ENCODE measurements at regions of chr17 and their contacts with region 1.

Region 1: GRCh38 chr17:82170412-82170961 is 42.2 kb downstream of the CCDC57 start:
- DNase-seq: no peak
- H3K4me3 ChIP-seq: no peak overlapping the region
- H3K27ac ChIP-seq: no peak overlapping the region
- H3K4me1 ChIP-seq: no peaks in the 10 kb centered on the region
- H3K27me3 ChIP-seq: no peaks in the 10 kb centered on the region
- CTCF ChIP-seq: no peak

Region 2: DNA sequence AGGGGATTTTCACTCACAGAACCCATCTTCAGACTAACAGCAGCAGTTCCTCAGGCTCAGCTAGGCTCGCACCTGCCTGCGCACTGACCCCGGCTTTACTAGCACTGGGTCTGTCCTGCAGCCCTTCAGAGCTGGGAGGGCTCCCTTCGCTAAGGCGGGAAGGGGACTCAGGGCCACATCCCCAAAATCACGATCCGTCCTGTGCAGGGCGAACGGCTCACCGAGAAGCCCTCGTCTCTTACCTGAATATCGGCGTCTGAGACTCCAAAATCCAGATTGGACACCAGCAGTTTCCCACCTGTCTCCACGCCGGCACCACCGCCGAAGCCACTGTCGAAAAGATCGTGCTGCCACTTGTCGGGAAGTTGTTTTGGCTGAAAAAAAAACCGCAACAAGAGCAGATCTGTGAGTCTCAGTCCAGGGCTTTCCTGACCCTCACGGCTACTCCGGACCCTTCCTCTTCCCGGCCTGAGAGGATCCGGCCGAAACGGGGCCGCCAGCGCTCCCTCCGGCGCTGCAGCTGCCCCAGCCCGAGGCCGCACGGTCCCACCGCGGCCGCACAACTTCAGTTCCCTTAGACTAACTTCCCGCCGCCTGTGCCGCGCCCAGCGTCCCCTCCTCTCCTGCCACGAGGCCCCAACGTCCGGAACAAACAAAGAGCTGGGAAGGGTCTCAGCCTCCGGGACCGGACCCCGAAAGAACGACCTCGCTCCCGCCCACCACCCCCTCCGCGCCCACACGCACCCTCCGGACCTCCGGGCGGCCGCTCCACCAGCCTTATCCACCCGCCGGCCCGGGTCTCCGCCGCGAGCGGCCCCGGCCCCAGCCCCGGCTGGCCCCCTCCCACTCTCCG is 279.8 kb before region 1 on chr17:
- CTCF ChIA-PET with region 1: no interaction called
- dilution Hi-C with region 1: loop called (anchors 10 kb)
- in situ Hi-C with region 1: no loop called
- intact Hi-C with region 1: no loop called
- DNase-seq: no peak
- H3K4me3 ChIP-seq: peak overlapping the region; percentile 80 to 88 (median 87)
- H3K27ac ChIP-seq: peak overlapping the region; percentile 77
- H3K4me1 ChIP-seq: peaks cover 21% of the 10 kb centered on the region
- H3K27me3 ChIP-seq: no peaks in the 10 kb centered on the region
- CTCF ChIP-seq: no peak